GM12878 (cell line): ENCODE measurements at regions of chr6 and their contacts with region 1.

Region 1: GRCh38 chr6:91482498-91482897 is 895.6 kb upstream of the MAP3K7 start:
- DNase-seq: peak; percentile 64
- ATAC-seq: peak; percentile 85
- H3K4me3 ChIP-seq: no peak overlapping the region
- H3K27ac ChIP-seq: peak overlapping the region; percentile 57
- H3K4me1 ChIP-seq: peaks cover 22% of the 10 kb centered on the region; the same call in 1 of the 2 replicates
- H3K27me3 ChIP-seq: no peaks in the 10 kb centered on the region
- CTCF ChIP-seq: no peak
- EP300 ChIP-seq: peak; percentile 69 to 78; a peak in 2 of 4 replicates
- POLR2A ChIP-seq: no peak
- RAD21 ChIP-seq: peak; percentile 3; the same call in 1 of the 2 replicates

Region 2: GRCh38 chr6:91328241-91328640 is 154.3 kb before region 1 on chr6:
- CTCF ChIA-PET with region 1: interaction called, 25 read pairs
- POLR2A ChIA-PET with region 1: no interaction called
- RAD21 ChIA-PET with region 1: interaction called, 26 read pairs
- SMC1A ChIA-PET with region 1: interaction called, 27 read pairs
- in situ Hi-C with region 1: no loop called
- intact Hi-C with region 1: loop called (anchors 2 kb)
- DNase-seq: no peak
- ATAC-seq: no peak
- H3K4me3 ChIP-seq: no peak overlapping the region
- H3K27ac ChIP-seq: no peak overlapping the region
- H3K4me1 ChIP-seq: no peaks in the 10 kb centered on the region
- H3K27me3 ChIP-seq: no peaks in the 10 kb centered on the region
- CTCF ChIP-seq: no peak
- EP300 ChIP-seq: no peak
- POLR2A ChIP-seq: no peak
- RAD21 ChIP-seq: no peak

Region 3: DNA sequence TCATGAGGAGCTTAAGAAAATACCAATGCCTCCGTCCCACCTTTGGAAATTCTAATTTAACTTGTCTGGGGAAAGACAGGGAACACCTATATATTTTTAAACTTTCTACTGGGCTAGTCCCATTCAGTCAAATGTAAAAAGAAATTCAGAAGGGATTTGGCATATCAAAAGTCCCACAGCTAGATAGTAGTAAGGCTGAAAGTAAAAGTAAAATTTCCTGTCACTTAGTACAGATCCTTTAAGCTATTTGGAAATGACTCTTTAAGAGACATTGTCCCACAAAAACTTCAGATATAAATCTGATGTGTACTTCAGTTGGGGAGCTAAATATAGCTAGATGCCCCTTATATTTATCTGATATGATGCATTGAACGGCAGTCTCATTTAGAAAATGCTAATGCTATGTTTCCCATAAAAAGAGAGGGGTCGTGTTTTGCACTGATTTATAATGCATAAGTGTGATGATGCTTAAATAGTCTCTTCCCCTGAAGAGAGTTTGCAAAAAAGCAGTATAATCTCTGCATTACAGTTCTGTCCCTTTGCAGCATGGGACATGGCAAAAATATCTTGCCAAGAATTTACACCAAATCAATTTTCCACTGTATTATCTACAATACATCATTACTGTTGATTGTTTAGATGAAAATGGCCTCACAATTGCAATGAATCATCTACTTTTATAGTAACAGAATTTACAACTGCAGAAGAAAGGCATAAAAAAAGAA is 34.8 kb before region 1 on chr6:
- CTCF ChIA-PET with region 1: interaction called, 7 read pairs
- POLR2A ChIA-PET with region 1: interaction called, 4 read pairs
- RAD21 ChIA-PET with region 1: interaction called, 29 read pairs
- SMC1A ChIA-PET with region 1: interaction called, 131 read pairs
- in situ Hi-C with region 1: no loop called
- intact Hi-C with region 1: no loop called
- DNase-seq: no peak
- ATAC-seq: peak; percentile 76
- H3K4me3 ChIP-seq: no peak overlapping the region
- H3K27ac ChIP-seq: no peak overlapping the region
- H3K4me1 ChIP-seq: no peaks in the 10 kb centered on the region; the same call in 1 of the 2 replicates
- H3K27me3 ChIP-seq: no peaks in the 10 kb centered on the region
- CTCF ChIP-seq: no peak
- EP300 ChIP-seq: no peak
- POLR2A ChIP-seq: no peak
- RAD21 ChIP-seq: no peak

Region 4: DNA sequence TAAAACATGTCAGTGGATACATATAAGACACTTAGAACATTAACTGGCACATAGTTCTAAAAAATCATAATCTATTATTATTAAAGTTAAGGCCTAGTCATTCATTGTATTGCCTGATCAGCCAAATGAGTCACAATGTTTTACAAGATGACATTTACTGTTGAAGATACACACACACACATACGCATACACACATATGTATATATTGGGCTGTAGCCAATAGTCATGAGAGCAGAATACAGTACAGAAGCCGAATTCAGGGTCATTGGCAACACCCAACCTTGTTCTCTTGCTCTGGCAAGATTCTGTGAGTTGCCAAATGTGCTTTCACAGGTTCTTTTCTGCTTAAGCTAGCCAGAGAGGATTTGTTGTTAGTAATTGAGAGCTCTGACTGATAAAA is 27.2 kb after region 1 on chr6:
- CTCF ChIA-PET with region 1: interaction called, 7 read pairs
- POLR2A ChIA-PET with region 1: interaction called, 3 read pairs
- RAD21 ChIA-PET with region 1: interaction called, 8 read pairs
- SMC1A ChIA-PET with region 1: interaction called, 10 read pairs
- in situ Hi-C with region 1: no loop called
- intact Hi-C with region 1: no loop called
- DNase-seq: no peak
- ATAC-seq: no peak
- H3K4me3 ChIP-seq: no peak overlapping the region
- H3K27ac ChIP-seq: no peak overlapping the region
- H3K4me1 ChIP-seq: no peaks in the 10 kb centered on the region
- H3K27me3 ChIP-seq: no peaks in the 10 kb centered on the region
- CTCF ChIP-seq: no peak
- EP300 ChIP-seq: no peak
- POLR2A ChIP-seq: no peak
- RAD21 ChIP-seq: no peak

Region 5: DNA sequence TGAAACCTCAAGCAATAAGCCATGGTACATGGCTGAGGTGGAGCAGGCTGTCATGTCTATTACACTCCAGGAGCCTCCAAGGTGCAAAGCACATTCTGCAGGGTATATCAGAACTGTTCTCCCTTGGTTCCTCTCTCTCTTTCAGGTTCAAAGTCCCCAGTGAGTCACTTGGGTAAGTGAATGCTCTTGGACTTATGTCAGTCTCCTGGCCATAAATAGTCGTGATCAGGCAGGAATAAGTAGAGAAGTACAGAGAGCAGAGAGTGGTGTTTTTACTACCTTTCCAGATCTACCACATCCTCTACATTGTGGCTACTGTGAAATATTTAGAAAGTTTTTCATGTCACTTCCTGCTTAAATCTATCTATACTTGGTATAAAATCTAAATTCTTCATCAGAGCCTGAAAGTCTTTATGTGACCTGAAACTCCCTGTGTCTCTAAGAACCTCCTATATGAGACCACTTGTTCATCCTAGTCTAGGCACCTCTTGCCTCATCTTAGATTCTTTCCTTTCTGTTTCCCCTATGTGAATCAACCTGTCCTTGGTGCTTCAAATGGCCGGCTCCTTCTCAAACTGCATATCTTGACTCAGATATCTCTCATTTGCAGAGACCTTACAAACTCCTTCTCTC is 181.9 kb after region 1 on chr6:
- CTCF ChIA-PET with region 1: no interaction called
- POLR2A ChIA-PET with region 1: no interaction called
- RAD21 ChIA-PET with region 1: no interaction called
- SMC1A ChIA-PET with region 1: no interaction called
- in situ Hi-C with region 1: no loop called
- intact Hi-C with region 1: loop called (anchors 5 kb)
- DNase-seq: peak; percentile 4
- ATAC-seq: peak; percentile 86
- H3K4me3 ChIP-seq: no peak overlapping the region
- H3K27ac ChIP-seq: no peak overlapping the region
- H3K4me1 ChIP-seq: no peaks in the 10 kb centered on the region; the same call in 1 of the 2 replicates
- H3K27me3 ChIP-seq: no peaks in the 10 kb centered on the region
- CTCF ChIP-seq: no peak
- EP300 ChIP-seq: no peak
- POLR2A ChIP-seq: no peak
- RAD21 ChIP-seq: no peak

Region 6: GRCh38 chr6:91681296-91681695 is 198.8 kb after region 1 on chr6:
- CTCF ChIA-PET with region 1: no interaction called
- POLR2A ChIA-PET with region 1: no interaction called
- RAD21 ChIA-PET with region 1: no interaction called
- SMC1A ChIA-PET with region 1: no interaction called
- in situ Hi-C with region 1: no loop called
- intact Hi-C with region 1: no loop called
- DNase-seq: no peak
- ATAC-seq: peak; percentile 62
- H3K4me3 ChIP-seq: no peak overlapping the region
- H3K27ac ChIP-seq: no peak overlapping the region
- H3K4me1 ChIP-seq: no peaks in the 10 kb centered on the region
- H3K27me3 ChIP-seq: no peaks in the 10 kb centered on the region
- CTCF ChIP-seq: no peak
- EP300 ChIP-seq: no peak
- POLR2A ChIP-seq: no peak
- RAD21 ChIP-seq: no peak

Region 7: GRCh38 chr6:92231220-92231701 is 748.8 kb after region 1 on chr6:
- CTCF ChIA-PET with region 1: no interaction called
- POLR2A ChIA-PET with region 1: no interaction called
- RAD21 ChIA-PET with region 1: interaction called, 5 read pairs
- SMC1A ChIA-PET with region 1: interaction called, 4 read pairs
- in situ Hi-C with region 1: no loop called
- intact Hi-C with region 1: loop called (anchors 10 kb)
- DNase-seq: no peak
- ATAC-seq: peak; percentile 94
- H3K4me3 ChIP-seq: no peak overlapping the region
- H3K27ac ChIP-seq: no peak overlapping the region
- H3K4me1 ChIP-seq: no peaks in the 10 kb centered on the region
- H3K27me3 ChIP-seq: no peaks in the 10 kb centered on the region
- CTCF ChIP-seq: no peak
- EP300 ChIP-seq: peak; percentile 71 to 91; a peak in 3 of 4 replicates
- POLR2A ChIP-seq: no peak
- RAD21 ChIP-seq: no peak